ENCODE measurements at regions of chr4 and their contacts with region 1.

Region 1: DNA sequence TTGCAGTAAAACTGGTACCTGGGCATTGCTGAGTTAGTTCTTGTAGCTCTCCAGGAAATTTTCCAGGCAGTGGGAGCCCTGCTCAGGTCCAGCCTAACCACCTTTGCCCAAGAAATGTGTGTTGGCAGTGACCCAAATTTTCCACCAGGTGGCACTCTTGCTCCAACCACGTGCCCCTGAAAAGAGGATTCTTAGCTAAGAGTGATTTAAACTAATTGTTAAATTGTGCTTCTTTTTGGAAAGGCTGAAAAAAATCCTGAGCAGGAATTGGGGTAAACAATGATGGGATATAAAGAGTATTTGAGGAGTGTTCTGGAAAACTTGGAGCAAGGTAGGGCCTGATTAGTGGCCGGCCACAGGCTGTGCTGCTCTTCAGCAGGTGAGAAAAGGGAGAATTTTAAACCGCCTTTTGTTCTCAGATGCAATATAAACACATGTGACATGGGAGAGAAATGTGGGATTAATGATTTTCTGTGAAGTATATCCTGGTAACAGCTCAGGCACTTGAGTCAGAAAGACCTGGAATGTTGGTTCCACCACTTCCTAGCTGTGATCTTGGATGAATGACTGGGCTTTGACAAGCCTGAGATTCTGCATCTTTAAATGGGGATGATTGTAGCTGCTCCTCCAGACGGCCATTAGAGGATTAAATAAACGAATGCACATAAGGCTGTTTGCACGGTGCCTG is 219.6 kb downstream of the PTTG2 start:
- DNase-seq: peak; percentile 83
- H3K4me3 Mint-ChIP-seq: no peak overlapping the region
- H3K27ac Mint-ChIP-seq: peak overlapping the region; percentile 14
- H3K4me1 Mint-ChIP-seq: peaks cover 39% of the 10 kb centered on the region
- H3K27me3 Mint-ChIP-seq: no peaks in the 10 kb centered on the region

Region 2: GRCh38 chr4:37549041-37549440 is 630.8 kb before region 1 on chr4:
- CTCF ChIA-PET with region 1: no interaction called
- POLR2A ChIA-PET with region 1: no interaction called
- intact Hi-C with region 1: no loop called
- DNase-seq: no peak
- H3K4me3 Mint-ChIP-seq: no peak overlapping the region
- H3K27ac Mint-ChIP-seq: no peak overlapping the region
- H3K4me1 Mint-ChIP-seq: no peaks in the 10 kb centered on the region
- H3K27me3 Mint-ChIP-seq: no peaks in the 10 kb centered on the region

Region 3: DNA sequence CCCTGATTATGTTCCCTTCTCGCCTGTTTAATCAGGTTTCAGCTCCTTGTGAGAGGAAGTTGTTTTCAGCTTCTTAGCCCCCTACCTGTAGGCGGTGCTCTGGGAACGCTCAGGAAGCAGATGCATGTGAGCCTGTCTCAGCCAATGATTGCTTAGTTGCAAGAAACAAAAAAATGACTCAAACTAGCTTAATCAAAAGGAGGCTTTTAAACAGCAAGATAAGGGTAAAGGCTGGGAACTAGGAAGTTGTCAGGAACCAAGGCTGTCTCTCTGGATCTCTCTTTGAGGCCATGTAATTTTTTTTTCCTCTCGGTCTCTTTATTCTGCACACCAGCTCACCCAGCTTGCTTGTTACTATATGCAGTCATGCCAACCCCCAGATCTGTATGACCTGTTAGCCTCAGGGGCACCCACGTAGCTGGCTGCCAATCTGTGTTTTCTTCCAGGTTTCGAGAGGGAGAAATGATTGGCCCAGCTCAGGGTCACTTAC is 110.5 kb before region 1 on chr4:
- CTCF ChIA-PET with region 1: interaction called, 20 read pairs
- POLR2A ChIA-PET with region 1: interaction called, 6 read pairs
- intact Hi-C with region 1: no loop called
- DNase-seq: peak; percentile 55
- H3K4me3 Mint-ChIP-seq: no peak overlapping the region
- H3K27ac Mint-ChIP-seq: peak overlapping the region; percentile 52
- H3K4me1 Mint-ChIP-seq: peaks cover 27% of the 10 kb centered on the region
- H3K27me3 Mint-ChIP-seq: no peaks in the 10 kb centered on the region

Region 4: DNA sequence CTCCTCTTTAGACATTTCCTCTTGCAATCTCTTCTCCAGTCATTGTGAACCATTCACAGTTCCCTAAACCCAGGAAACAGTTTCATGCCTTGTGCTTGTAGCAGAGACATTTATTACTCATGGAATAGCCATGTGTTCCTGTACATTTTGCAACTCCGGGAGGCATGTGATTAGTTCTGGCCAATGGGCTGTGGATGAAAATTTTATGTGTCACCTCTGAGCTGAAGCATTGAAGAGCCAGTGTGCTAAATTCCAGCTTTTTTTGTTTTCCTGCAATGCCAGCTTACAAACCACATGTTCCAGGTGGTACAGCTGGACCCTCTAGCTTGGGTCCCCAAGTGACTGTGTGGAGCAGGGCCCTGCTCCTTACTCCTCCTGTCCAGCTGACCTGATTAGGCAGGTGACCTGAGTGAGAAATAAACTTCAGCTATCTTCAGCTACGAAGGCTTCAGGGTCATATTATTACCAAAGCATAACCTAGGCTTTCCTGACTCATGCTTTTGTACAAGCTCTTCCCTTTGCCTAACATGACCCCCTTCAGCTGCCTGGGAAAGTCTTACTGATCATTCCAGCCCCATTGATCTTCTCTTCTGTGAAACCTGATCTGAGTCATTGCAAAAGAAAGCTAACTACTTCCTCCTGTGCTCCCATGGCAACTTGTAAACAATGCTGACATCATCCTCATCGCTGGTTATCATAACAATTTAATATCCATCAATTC is 19.2 kb before region 1 on chr4:
- CTCF ChIA-PET with region 1: interaction called, 13 read pairs
- POLR2A ChIA-PET with region 1: no interaction called
- intact Hi-C with region 1: loop called (anchors 1 kb)
- DNase-seq: peak; percentile 75
- H3K4me3 Mint-ChIP-seq: peak overlapping the region; percentile 10
- H3K27ac Mint-ChIP-seq: peak overlapping the region; percentile 68
- H3K4me1 Mint-ChIP-seq: peaks cover 74% of the 10 kb centered on the region
- H3K27me3 Mint-ChIP-seq: no peaks in the 10 kb centered on the region

Region 5: DNA sequence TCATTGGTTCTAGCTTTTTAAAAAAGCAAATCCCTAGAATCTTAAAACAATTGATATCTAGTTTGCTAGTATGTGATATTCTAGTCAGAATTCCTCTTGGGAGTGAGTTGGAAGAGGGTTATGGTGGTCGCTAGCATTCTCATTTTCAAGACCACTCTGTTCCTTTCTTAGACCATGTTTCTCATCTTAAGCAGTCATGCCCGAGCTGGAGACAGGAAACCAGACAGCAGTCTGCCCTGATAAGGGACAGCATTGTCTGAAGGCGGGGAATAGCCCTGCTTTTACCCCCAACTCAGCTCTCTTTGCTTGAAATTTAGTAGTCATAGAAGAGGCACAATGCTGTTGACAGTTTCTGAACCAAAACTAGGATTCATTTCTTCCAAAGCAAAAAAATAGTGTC is 489.4 kb after region 1 on chr4:
- CTCF ChIA-PET with region 1: interaction called, 165 read pairs
- POLR2A ChIA-PET with region 1: no interaction called
- intact Hi-C with region 1: no loop called
- DNase-seq: peak; percentile 35
- H3K4me3 Mint-ChIP-seq: peak overlapping the region; percentile 14
- H3K27ac Mint-ChIP-seq: peak overlapping the region; percentile 31
- H3K4me1 Mint-ChIP-seq: peaks cover 86% of the 10 kb centered on the region
- H3K27me3 Mint-ChIP-seq: no peaks in the 10 kb centered on the region

Region 6: GRCh38 chr4:38693569-38693968 is 513.7 kb after region 1 on chr4:
- CTCF ChIA-PET with region 1: interaction called, 11 read pairs
- POLR2A ChIA-PET with region 1: no interaction called
- intact Hi-C with region 1: no loop called
- DNase-seq: no peak
- H3K4me3 Mint-ChIP-seq: no peak overlapping the region
- H3K27ac Mint-ChIP-seq: no peak overlapping the region
- H3K4me1 Mint-ChIP-seq: peaks cover 6% of the 10 kb centered on the region
- H3K27me3 Mint-ChIP-seq: no peaks in the 10 kb centered on the region

Region 7: DNA sequence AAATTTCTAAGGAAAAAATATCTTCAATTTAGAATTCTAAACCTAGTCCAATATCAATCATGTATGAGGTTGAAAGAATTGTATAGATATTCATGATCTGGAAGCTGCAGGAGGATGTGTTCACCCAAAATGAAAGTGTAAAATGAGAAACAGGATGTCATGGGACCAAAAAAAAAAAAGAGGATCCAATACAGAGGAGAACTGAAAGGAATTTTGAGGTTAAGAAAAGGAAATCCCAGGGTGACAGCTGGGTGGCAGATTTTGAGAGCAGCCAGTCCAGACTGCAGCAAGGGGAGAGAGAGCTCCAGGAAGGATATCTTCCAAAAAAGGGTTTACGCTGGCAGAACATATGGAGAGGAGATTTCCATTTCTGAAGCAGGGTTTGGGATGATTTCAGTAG is 564.0 kb after region 1 on chr4:
- CTCF ChIA-PET with region 1: interaction called, 10 read pairs
- POLR2A ChIA-PET with region 1: no interaction called
- intact Hi-C with region 1: no loop called
- DNase-seq: no peak
- H3K4me3 Mint-ChIP-seq: no peak overlapping the region
- H3K27ac Mint-ChIP-seq: no peak overlapping the region
- H3K4me1 Mint-ChIP-seq: peaks cover 3% of the 10 kb centered on the region
- H3K27me3 Mint-ChIP-seq: no peaks in the 10 kb centered on the region

Region 8: DNA sequence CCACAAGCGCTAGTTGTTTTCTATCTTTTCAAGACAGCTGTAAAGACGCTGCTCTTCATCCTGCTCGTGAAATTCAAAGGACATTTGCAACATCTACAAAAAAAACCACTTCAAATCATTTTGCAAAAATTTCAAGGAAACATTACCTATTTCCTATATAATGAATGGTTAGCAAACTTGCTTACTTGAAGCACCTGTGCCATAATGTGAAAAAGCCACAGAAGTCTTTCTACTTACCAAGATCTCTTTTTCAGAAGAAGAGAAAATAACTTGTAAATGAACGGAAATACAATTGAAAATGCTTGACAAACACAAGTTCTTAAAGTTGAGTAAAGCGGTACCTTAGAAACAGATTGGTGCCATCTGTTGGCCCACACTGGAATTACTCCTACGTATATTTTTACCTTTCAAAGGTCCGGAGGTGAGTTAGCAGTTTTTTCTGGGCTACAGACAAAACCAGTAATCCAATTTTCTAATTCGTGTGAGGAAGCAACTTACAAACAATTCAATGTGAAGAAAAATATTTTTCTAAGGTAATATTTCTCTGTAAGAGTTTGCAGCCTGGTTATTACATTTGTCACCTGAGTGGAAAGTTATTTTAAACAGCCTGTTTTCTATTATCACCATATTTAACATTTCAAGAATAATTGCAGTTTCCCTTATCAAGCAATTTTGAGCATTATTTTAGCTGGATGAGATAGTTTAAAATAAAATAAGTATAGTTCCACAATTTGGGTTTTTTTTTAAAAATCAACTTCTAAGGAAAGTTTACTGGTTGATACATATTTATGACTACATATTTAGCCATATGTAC is 676.9 kb after region 1 on chr4 and contains the start of gene TLR6:
- CTCF ChIA-PET with region 1: interaction called, 4 read pairs
- POLR2A ChIA-PET with region 1: no interaction called
- intact Hi-C with region 1: loop called (anchors 10 kb)
- DNase-seq: peak; percentile 70
- H3K4me3 Mint-ChIP-seq: peak within 1 kb of the TSS; percentile 77
- H3K27ac Mint-ChIP-seq: peak within 1 kb of the TSS; percentile 89
- H3K4me1 Mint-ChIP-seq: peaks cover 35% of the 10 kb centered on the region
- H3K27me3 Mint-ChIP-seq: peaks cover 4% of the 10 kb centered on the region
- total RNA-seq, gene TLR6: 1.4 to 2.2 TPM

Measured in activated CD4-positive, alpha-beta memory T cell treated with anti-CD3 and anti-CD28 coated beads for 36 hours (primary cell).